Left lung (tissue), 14 donors: ENCODE measurements at regions of chr11 and their contacts with region 1.

Region 1: GRCh38 chr11:64846998-64847666 is 2.7 kb upstream of the CDC42BPG start:
- DNase-seq: peak; percentile 82 to 99 (median 93)
- ATAC-seq: peak; percentile 72
- H3K4me3 ChIP-seq: no peak overlapping the region
- H3K27ac ChIP-seq: peak overlapping the region in 1 of 2 donors; percentile 46
- H3K4me1 ChIP-seq: peaks cover 18 to 79% of the 10 kb centered on the region in 2 donors
- H3K27me3 ChIP-seq: no peaks in the 10 kb centered on the region
- CTCF ChIP-seq: peak; percentile 98 to 99

Region 2: GRCh38 chr11:64094463-64095260 is 752.5 kb before region 1 on chr11:
- intact Hi-C with region 1: no loop called
- DNase-seq: peak in 2 of 4 donors; percentile 57 to 80
- ATAC-seq: peak; percentile 29
- H3K4me3 ChIP-seq: no peak overlapping the region
- H3K27ac ChIP-seq: peak overlapping the region in 1 of 2 donors; percentile 9
- H3K4me1 ChIP-seq: peaks cover 12 to 37% of the 10 kb centered on the region in 2 donors
- H3K27me3 ChIP-seq: no peaks in the 10 kb centered on the region
- CTCF ChIP-seq: no peak

Region 3: GRCh38 chr11:64894070-64894796 is 47.1 kb after region 1 on chr11:
- intact Hi-C with region 1: loop called (anchors 5 to 10 kb)
- DNase-seq: peak; percentile 59 to 97 (median 80)
- ATAC-seq: peak; percentile 90
- H3K4me3 ChIP-seq: no peak overlapping the region
- H3K27ac ChIP-seq: no peak overlapping the region
- H3K4me1 ChIP-seq: peaks cover 0 to 16% of the 10 kb centered on the region in 2 donors
- H3K27me3 ChIP-seq: no peaks in the 10 kb centered on the region
- CTCF ChIP-seq: peak; percentile 76 to 96

Region 4: GRCh38 chr11:65027213-65028067 is 180.3 kb after region 1 on chr11 and contains the start of gene SNX15:
- intact Hi-C with region 1: loop called in 1 of 2 experiments (anchors 10 kb)
- DNase-seq: peak; percentile 93 to 98 (median 98)
- ATAC-seq: peak; percentile 98
- H3K4me3 ChIP-seq: peak within 1 kb of the TSS; percentile 42 to 51
- H3K27ac ChIP-seq: peak within 1 kb of the TSS; percentile 86
- H3K4me1 ChIP-seq: peaks cover 7 to 23% of the 10 kb centered on the region in 2 donors
- H3K27me3 ChIP-seq: no peaks in the 10 kb centered on the region
- CTCF ChIP-seq: peak; percentile 65 to 88
- polyA plus RNA-seq, gene SNX15: 22.0 to 26.3 (median 23.3) TPM